Right ventricle myocardium inferior (tissue), 1 donor: ENCODE measurements at regions of chr19 and their contacts with region 1.

Region 1: DNA sequence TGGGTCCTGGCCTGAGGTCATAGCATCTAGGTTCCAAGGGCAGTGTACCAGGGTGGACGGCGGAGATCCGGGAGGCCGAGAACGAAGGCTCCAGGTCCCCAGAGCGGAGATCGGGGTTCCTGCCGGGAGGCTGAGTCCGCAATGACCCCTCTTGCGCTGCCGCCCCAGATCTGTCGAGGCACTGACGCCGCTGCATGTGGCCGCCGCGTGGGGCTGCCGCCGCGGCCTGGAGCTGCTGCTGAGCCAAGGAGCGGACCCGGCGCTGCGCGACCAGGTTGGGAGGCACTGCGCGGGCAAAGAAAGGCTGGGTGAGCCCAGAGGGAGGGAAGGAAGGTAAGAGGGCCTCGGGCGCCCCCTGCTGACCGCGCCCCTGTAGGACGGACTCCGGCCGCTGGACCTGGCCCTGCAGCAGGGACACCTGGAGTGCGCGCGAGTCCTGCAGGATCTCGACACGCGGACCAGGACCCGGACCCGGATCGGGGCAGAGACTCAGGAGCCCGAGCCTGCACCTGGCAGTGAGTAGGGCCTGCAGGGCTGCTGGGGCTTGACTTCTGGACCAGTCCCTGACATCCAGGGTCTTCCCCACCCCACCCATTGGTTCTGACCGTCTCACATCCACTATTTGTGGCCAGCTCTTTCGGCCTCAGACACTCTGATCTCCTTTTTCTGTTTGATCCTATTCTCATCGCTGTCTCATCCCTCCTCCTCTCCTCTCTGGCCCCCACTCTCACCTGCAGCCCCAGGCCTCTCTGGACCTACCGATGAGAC is 971 bp downstream of the ANKLE1 start:
- DNase-seq: peak; percentile 94
- ATAC-seq: peak; percentile 93

Region 2: GRCh38 chr19:16771618-16772017 is 511.1 kb before region 1 on chr19:
- intact Hi-C with region 1: loop called (anchors 10 kb)
- DNase-seq: peak; percentile 84
- ATAC-seq: peak; percentile 73

Region 3: DNA sequence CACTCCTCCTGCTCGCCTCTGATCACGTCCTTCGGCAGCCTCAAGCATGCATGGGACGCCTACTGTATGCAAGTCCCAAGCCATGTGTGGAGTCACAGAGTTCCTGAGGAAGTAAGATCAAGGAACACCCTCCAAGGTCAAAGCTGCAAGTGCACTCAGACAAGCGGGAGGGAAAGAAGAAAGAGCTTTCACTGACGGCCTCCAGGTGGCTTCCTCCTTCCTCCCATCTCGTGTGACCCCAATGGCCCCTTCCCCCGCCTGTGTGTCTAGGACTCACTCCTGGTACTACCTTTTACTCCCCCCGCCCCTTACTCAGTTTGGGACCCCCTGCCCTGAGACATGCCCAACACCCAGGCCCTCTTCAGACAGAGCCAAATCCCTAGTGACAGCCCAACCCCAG is 213.5 kb before region 1 on chr19:
- intact Hi-C with region 1: loop called (anchors 1 kb)
- DNase-seq: no peak
- ATAC-seq: no peak

Region 4: DNA sequence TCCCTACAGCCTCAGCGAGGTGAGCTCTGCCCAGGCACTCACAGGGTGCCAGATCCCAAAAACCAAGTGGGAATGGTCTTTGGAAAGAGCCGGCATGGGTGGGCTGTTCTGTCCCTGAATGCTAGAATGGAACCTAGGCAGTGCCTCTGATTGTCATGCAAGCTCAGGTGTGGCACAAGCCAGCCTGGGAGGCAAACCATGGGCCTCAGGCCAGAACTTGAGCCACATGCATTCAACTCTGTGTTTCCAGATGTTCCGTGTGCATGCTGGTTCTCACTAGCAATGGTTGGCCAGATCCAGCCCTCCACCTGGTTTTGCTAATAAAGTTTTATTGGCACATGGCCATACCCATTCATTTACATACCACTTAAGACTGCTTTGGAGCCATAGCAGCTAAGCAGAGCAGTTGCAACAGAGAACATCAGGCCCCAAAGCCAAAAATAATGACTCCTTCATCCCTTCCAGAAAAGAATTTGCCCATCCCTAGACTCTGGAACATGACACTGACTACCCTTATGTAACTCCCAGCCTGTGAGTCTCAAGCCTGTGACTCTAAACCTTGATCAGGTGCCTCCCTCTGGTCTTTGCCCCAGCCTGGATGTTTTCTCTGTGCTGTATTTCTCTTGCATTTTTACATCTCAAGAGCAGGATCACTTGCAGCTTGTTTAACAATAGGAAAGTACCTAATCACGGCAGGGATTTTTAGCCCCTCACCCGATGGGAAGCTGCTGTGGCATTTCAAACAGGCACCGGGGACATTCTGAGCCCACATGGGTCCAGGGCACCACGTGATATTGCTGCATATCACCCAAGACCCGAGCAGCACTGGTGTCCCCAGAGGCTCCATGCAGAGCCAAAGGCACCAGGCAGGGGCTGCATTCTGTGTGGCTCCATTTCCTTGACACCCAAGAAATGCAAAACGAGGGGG is 122.9 kb before region 1 on chr19:
- intact Hi-C with region 1: no loop called
- DNase-seq: no peak
- ATAC-seq: no peak

Region 5: DNA sequence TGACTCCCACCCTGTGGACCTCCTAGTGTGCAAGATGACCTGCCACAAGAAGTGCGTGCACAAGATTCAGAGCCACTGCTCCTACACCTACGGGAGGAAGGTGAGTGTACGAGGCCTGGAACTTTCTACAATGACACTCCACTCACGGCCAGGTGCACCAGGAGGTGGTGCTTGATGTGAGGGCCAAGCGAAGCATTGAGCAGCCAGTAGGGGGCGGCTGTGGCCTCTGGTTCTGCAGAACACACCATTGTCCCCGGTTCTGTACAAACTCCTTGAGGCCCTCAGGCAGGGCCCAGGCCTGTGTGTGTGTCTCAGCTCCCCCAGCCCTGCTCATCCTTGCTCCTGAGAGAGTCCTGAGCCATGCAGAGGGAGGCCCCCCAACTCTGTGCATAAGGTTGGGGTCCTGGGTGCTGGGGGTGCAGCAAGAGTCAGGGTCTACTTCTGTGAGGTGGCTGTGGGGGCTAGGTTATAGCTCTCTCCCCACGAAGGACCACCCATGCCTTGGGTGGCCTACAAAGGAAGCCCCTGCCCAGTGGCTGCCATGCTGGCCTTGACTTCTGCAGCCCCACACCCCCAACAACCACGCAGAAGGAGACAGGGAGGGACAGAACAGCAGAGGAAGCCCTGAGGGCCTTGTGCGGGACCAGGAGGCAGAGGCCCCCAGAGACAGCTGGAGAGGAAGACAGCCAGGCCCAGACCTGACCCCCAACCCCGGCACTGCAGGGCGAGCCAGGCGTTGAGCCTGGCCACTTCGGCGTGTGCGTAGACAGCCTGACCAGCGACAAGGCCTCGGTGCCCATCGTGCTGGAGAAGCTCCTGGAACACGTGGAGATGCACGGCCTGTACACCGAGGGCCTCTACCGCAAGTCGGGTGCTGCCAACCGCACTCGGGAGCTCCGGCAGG is 77.2 kb before region 1 on chr19:
- intact Hi-C with region 1: loop called (anchors 2 kb)
- DNase-seq: peak; percentile 70
- ATAC-seq: peak; percentile 42

Region 6: DNA sequence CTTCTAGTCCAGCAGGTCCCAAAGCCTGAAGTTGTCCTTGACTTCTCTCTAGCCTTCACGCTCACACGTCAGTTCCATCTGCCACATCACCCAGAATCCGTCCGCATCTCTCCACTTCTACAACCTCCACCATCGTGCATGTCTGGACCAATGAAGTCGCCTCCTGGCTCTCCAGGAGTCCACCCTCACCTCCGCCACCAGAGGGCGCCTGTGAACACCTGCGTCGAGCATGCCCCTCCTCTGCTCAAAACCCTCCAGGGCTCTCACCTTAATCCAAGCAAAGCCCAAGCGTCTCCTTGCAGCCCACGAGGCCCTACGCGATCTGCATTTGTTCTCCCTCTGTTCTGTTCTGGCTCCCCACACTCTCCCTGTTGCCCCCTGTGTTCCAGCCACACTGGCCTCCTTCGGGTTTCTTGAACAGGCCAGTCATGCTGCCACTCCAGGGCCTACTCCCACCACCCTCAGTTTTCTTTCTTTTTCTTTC is 21.8 kb before region 1 on chr19:
- intact Hi-C with region 1: loop called (anchors 1 kb)
- DNase-seq: peak; percentile 91
- ATAC-seq: peak; percentile 89

Region 7: DNA sequence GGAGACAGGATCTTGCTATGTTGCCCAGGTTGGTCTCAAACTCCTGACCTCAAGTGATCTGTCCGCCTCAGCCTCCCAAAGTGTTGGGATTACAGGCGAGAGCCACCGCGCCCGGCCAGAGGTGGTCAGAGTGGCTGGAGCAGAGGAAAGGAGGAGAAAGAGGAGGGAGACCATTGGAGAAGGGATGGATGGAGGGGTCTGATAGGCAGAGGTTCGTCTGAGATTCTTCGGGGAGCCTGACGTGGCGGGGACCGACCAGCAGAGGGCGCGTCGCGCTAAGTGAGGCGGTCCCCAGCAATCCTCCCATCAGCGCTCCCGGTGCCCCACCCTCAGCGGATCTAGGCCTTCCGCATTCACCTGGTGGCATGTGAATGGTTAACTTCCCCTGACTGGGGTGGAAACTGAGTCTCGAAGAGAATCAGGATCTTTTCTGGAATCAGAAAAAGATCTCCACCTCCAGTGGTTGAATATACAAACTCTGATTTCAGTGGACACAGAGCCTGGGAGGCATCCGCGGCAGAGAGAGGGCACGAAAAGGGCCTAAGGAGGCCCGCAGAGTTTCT is 63.5 kb after region 1 on chr19:
- intact Hi-C with region 1: no loop called
- DNase-seq: peak; percentile 89
- ATAC-seq: peak; percentile 72